MCF 10A (cell line): ENCODE measurements at regions of chr20 and their contacts with region 1.

Region 1: GRCh38 chr20:3563548-3564177 is 92.8 kb downstream of the ATRN start:
- DNase-seq: peak; percentile 52
- H3K4me3 Mint-ChIP-seq: no peak overlapping the region
- H3K27ac Mint-ChIP-seq: no peak overlapping the region
- H3K4me1 Mint-ChIP-seq: no peaks in the 10 kb centered on the region
- H3K27me3 Mint-ChIP-seq: no peaks in the 10 kb centered on the region
- CTCF ChIP-seq: peak; percentile 60

Region 2: DNA sequence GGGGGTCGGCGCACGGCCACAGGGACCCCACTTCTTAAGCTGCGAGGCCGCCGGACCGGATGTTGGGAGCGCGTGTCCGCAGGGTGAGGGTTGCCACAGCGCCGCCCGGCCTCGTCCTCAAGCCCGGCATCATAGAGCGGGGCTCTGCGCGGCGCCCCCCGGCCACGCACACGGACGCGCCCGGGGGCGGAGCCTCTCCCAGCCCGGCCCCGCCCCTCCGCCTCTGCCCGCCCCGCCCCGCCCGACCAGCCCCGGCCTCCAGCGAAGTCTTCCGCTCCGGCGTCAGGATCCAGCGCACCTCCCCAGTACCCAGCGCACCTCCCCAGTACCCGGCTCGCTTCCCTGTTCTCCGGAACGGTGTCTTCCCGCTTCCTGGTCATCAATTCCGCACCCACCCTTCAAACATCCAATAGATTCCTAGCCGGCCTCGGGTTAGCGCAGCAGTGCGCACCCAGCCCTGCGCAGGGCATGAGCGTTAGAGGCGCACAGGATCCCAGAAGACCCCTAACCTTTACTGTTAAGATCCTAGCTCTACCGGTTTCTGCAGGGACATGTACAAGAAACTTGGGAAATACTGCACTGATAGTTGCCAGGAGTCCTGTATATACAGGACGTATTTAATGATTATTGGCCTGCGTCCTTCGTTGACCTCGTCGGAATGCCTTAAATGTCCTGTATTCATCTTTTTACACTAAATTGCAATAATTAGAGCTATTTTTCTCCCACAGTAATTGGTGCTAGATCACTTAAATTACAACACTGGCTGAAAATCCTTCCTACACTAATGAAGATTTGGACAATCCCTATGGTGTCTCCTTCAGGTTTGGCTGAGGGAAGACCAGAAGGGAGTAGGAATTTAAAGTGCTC is 155.7 kb before region 1 on chr20:
- CTCF ChIA-PET with region 1: interaction called, 11 read pairs
- POLR2A ChIA-PET with region 1: interaction called, 3 read pairs
- intact Hi-C with region 1: loop called (anchors 1 kb)
- DNase-seq: peak; percentile 84
- H3K4me3 Mint-ChIP-seq: peak overlapping the region; percentile 90
- H3K27ac Mint-ChIP-seq: peak overlapping the region; percentile 75
- H3K4me1 Mint-ChIP-seq: peaks cover 22% of the 10 kb centered on the region
- H3K27me3 Mint-ChIP-seq: no peaks in the 10 kb centered on the region
- CTCF ChIP-seq: no peak

Region 3: DNA sequence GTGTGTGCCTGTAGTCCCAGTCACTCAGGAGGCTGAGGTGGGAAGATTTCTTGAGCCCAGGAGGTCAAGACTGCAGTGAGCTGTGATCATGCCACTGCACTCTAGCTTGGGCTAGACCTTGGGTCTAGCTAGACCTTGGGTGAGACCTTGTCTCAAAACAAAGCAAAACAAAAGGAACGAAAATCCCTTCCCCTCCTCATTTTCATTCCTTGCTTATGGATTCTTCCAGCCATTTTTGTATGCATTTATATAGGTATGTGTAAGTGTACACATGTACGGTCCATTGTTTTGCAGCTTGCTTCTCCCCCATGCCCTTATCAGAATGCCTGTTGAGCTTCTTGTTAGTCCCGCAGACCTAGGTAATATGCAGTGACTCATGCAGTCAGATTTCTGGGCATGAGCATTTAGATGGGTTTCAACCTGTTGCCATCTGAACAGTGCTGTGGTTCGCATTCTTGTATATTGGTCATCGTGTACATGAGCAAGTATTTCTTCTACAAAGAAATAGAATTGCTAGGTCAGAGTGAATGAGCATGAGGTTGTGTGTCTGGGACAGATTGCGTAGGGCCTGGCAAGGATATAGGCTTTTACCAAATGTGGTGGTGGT is 19.7 kb before region 1 on chr20:
- CTCF ChIA-PET with region 1: interaction called, 19 read pairs
- POLR2A ChIA-PET with region 1: interaction called, 6 read pairs
- intact Hi-C with region 1: no loop called
- DNase-seq: peak; percentile 89
- H3K4me3 Mint-ChIP-seq: no peak overlapping the region
- H3K27ac Mint-ChIP-seq: peak overlapping the region; percentile 65
- H3K4me1 Mint-ChIP-seq: peaks cover 16% of the 10 kb centered on the region
- H3K27me3 Mint-ChIP-seq: no peaks in the 10 kb centered on the region
- CTCF ChIP-seq: no peak

Region 4: DNA sequence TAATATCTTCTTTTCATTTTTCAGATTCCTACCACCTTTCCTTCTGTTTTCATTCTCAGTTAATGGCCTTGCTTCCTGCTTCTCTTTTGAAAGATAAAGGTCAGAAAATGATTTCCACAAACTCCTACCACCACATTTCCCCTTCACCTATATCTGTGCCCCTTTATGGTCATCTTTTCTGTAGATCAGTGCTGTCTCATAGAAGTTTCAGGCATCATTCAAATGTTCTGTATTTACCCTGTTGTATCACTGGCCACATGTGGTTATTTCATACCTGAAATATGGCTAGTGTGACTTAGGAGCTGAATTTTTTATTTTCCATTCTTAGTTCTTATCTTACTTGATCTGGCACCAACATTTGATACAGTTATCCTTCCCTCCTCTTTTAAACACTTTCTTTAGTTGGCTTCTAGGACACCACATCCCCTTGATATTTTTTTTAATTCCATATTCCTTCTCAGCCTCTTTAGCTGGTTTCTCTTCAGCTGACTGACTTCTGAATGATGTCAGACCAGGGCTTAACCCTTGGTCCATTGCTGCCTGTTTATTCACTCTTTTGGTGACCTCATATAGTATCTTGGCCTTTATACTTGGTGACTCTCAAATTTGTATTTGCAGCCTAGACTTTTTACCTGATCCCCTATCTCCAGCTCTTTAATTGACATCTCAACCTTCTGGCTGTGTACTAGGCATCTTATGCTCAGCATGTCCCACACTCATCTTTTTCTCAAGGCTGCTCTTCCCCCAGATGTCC is 11.8 kb before region 1 on chr20:
- CTCF ChIA-PET with region 1: interaction called, 19 read pairs
- POLR2A ChIA-PET with region 1: interaction called, 6 read pairs
- intact Hi-C with region 1: no loop called
- DNase-seq: no peak
- H3K4me3 Mint-ChIP-seq: no peak overlapping the region
- H3K27ac Mint-ChIP-seq: no peak overlapping the region
- H3K4me1 Mint-ChIP-seq: no peaks in the 10 kb centered on the region
- H3K27me3 Mint-ChIP-seq: no peaks in the 10 kb centered on the region
- CTCF ChIP-seq: no peak

Region 5: DNA sequence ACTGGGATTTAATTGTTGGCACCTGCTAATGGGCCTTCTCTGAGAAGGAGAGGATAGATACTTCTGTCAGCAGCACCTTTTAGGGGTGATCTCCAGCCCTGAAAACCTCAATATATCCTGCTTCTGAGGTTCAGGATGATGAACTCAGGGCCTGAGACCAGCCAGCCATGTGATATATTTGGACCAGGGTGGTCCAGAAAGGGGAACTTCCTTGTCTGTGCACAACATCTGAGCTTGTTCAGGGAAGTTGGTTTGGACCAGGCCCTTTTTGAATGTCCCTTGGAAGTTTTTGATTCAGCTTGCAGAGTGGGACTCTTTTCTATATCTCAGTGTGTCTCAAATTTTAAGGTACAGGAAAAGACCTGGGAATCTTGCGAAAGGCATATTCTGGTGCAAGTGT is 13.7 kb after region 1 on chr20:
- CTCF ChIA-PET with region 1: interaction called, 29 read pairs
- POLR2A ChIA-PET with region 1: interaction called, 3 read pairs
- intact Hi-C with region 1: no loop called
- DNase-seq: no peak
- H3K4me3 Mint-ChIP-seq: no peak overlapping the region
- H3K27ac Mint-ChIP-seq: no peak overlapping the region
- H3K4me1 Mint-ChIP-seq: no peaks in the 10 kb centered on the region
- H3K27me3 Mint-ChIP-seq: no peaks in the 10 kb centered on the region
- CTCF ChIP-seq: no peak

Region 6: DNA sequence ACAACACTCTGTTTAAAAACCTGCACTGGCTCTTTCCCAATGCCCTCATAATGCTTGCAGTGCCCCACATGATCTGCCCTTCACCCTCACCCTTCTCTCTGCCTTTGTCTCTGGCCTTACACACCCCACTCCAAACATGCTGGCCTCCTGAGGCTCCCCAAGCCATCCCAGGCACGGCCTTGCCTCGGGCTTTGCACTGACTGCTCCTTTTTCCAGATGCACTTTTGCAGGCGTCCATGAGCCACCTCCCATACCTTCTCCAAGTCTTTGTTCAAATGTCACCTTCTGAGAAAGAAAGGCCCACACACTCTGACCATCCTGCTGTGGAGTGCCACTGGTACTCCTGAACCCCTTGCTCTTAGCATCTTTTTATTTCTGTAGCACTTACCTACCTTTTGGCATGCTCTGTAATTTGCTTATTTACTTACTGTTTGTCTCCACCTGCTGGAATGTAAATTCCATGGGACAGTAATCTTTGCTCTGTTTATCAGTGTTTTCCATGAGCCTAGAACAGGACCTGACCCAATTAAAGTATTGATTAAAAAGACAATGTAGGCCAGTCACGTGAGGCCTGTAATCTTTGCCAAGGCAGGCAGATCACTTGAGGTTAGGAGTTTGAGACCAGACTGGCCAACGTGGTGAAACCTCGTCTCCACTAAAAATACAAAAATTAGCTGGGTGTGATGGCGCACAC is 68.8 kb after region 1 on chr20:
- CTCF ChIA-PET with region 1: interaction called, 3 read pairs
- POLR2A ChIA-PET with region 1: no interaction called
- intact Hi-C with region 1: loop called (anchors 1 kb)
- DNase-seq: no peak
- H3K4me3 Mint-ChIP-seq: no peak overlapping the region
- H3K27ac Mint-ChIP-seq: no peak overlapping the region
- H3K4me1 Mint-ChIP-seq: no peaks in the 10 kb centered on the region
- H3K27me3 Mint-ChIP-seq: no peaks in the 10 kb centered on the region
- CTCF ChIP-seq: peak; percentile 12